ENCODE measurements at regions of chr6 and their contacts with region 1.

Region 1: GRCh38 chr6:170405311-170405975 is 98.9 kb downstream of the FAM120B start:
- DNase-seq: no peak
- CTCF ChIP-seq: no peak

Region 2: GRCh38 chr6:170416303-170416702 is 10.9 kb after region 1 on chr6:
- CTCF ChIA-PET with region 1: interaction called, 10 read pairs
- POLR2A ChIA-PET with region 1: no interaction called
- DNase-seq: no peak
- CTCF ChIP-seq: no peak

Measured in GM10248 (cell line).